Activated B cell treated with CpG ODN at 0.5 μM for 24 hours (primary cell): ENCODE measurements at regions of chr7 and their contacts with region 1.

Region 1: GRCh38 chr7:121372376-121373010 is 23.6 kb downstream of the FAM3C start:
- DNase-seq: no peak
- ATAC-seq: peak; percentile 71
- H3K4me3 Mint-ChIP-seq: peak overlapping the region; percentile 63
- H3K27ac Mint-ChIP-seq: peak overlapping the region; percentile 91
- H3K4me1 Mint-ChIP-seq: peaks cover 91% of the 10 kb centered on the region
- H3K27me3 Mint-ChIP-seq: no peaks in the 10 kb centered on the region
- CTCF ChIP-seq: no peak

Region 2: GRCh38 chr7:121385800-121386179 is 13.3 kb after region 1 on chr7:
- CTCF ChIA-PET with region 1: interaction called, 37 read pairs
- POLR2A ChIA-PET with region 1: interaction called, 38 read pairs
- intact Hi-C with region 1: loop called (anchors 1 kb)
- DNase-seq: no peak
- ATAC-seq: peak; percentile 86
- H3K4me3 Mint-ChIP-seq: peak overlapping the region; percentile 54
- H3K27ac Mint-ChIP-seq: peak overlapping the region; percentile 83
- H3K4me1 Mint-ChIP-seq: peaks cover 96% of the 10 kb centered on the region
- H3K27me3 Mint-ChIP-seq: no peaks in the 10 kb centered on the region
- CTCF ChIP-seq: no peak

Region 3: GRCh38 chr7:121437456-121438127 is 65.1 kb after region 1 on chr7:
- CTCF ChIA-PET with region 1: interaction called, 14 read pairs
- POLR2A ChIA-PET with region 1: interaction called, 4 read pairs
- intact Hi-C with region 1: loop called (anchors 1 kb)
- DNase-seq: no peak
- ATAC-seq: peak; percentile 9
- H3K4me3 Mint-ChIP-seq: peak overlapping the region; percentile 82
- H3K27ac Mint-ChIP-seq: peak overlapping the region; percentile 89
- H3K4me1 Mint-ChIP-seq: peaks cover 47% of the 10 kb centered on the region
- H3K27me3 Mint-ChIP-seq: no peaks in the 10 kb centered on the region
- CTCF ChIP-seq: no peak